ENCODE measurements at regions of chr10 and their contacts with region 1.

Region 1: GRCh38 chr10:12656518-12657142 is 307.3 kb downstream of the CAMK1D start:
- DNase-seq: no peak
- ATAC-seq: peak; percentile 70
- H3K4me3 Mint-ChIP-seq: no peak overlapping the region
- H3K27ac Mint-ChIP-seq: no peak overlapping the region
- H3K4me1 Mint-ChIP-seq: peaks cover 13% of the 10 kb centered on the region
- H3K27me3 Mint-ChIP-seq: no peaks in the 10 kb centered on the region

Region 2: GRCh38 chr10:12214763-12215218 is 441.8 kb before region 1 on chr10:
- CTCF ChIA-PET with region 1: interaction called, 37 read pairs
- POLR2A ChIA-PET with region 1: no interaction called
- DNase-seq: peak; percentile 65
- ATAC-seq: peak; percentile 42
- H3K4me3 Mint-ChIP-seq: peak overlapping the region; percentile 34
- H3K27ac Mint-ChIP-seq: peak overlapping the region; percentile 85
- H3K4me1 Mint-ChIP-seq: peaks cover 14% of the 10 kb centered on the region
- H3K27me3 Mint-ChIP-seq: no peaks in the 10 kb centered on the region

Region 3: DNA sequence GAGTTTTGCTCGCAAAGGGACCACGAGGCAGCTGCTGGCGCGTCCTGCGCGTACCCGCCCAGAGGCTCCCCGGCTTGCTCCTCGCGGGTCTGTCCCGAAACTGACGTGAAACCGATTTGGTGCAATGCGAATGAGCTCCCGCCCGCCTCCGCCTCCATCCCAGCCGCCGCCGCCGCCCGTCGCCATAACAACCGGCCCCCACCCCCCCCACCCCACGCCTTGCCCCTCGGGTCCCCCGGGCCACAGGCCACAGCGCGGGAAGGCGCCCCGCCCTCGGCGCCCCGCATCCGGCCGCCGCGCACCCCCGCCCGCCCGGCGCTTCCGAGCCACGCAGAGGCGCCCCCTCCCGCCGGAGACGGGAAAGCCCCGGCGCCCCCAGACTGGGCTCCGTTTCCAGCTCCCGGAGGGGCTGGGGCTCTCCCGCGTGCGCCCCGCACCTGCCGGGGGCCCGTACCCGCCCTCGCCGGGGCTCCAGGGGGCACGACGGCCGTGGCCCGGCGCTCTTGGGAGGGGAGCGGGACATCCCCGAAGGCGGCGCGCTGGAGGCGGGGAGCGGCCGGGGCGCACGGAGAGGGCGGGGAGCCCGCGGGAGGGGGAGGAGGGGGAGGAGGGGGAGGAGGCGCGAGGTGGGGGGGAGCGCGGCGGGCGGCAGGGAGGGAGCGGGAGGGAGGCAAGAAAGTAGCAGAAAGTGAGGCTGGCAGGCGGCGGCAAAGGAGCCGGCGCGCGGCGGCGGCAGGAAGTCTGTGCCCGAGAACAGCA is 307.6 kb before region 1 on chr10 and contains the start of gene CAMK1D:
- CTCF ChIA-PET with region 1: interaction called, 11 read pairs
- POLR2A ChIA-PET with region 1: no interaction called
- DNase-seq: peak; percentile 93
- ATAC-seq: peak; percentile 76
- H3K4me3 Mint-ChIP-seq: peak within 1 kb of the TSS; percentile 89
- H3K27ac Mint-ChIP-seq: peak within 1 kb of the TSS; percentile 90
- H3K4me1 Mint-ChIP-seq: peaks cover 37% of the 10 kb centered on the region
- H3K27me3 Mint-ChIP-seq: peaks cover 41% of the 10 kb centered on the region
- total RNA-seq, gene CAMK1D: 3.4 to 4.2 TPM

Region 4: GRCh38 chr10:12375076-12375504 is 281.5 kb before region 1 on chr10:
- CTCF ChIA-PET with region 1: no interaction called
- POLR2A ChIA-PET with region 1: no interaction called
- DNase-seq: no peak
- ATAC-seq: no peak
- H3K4me3 Mint-ChIP-seq: no peak overlapping the region
- H3K27ac Mint-ChIP-seq: no peak overlapping the region
- H3K4me1 Mint-ChIP-seq: no peaks in the 10 kb centered on the region
- H3K27me3 Mint-ChIP-seq: no peaks in the 10 kb centered on the region

Region 5: GRCh38 chr10:12418000-12418399 is 238.6 kb before region 1 on chr10:
- CTCF ChIA-PET with region 1: no interaction called
- POLR2A ChIA-PET with region 1: no interaction called
- DNase-seq: no peak
- ATAC-seq: no peak
- H3K4me3 Mint-ChIP-seq: no peak overlapping the region
- H3K27ac Mint-ChIP-seq: no peak overlapping the region
- H3K4me1 Mint-ChIP-seq: peaks cover 20% of the 10 kb centered on the region
- H3K27me3 Mint-ChIP-seq: no peaks in the 10 kb centered on the region

Region 6: DNA sequence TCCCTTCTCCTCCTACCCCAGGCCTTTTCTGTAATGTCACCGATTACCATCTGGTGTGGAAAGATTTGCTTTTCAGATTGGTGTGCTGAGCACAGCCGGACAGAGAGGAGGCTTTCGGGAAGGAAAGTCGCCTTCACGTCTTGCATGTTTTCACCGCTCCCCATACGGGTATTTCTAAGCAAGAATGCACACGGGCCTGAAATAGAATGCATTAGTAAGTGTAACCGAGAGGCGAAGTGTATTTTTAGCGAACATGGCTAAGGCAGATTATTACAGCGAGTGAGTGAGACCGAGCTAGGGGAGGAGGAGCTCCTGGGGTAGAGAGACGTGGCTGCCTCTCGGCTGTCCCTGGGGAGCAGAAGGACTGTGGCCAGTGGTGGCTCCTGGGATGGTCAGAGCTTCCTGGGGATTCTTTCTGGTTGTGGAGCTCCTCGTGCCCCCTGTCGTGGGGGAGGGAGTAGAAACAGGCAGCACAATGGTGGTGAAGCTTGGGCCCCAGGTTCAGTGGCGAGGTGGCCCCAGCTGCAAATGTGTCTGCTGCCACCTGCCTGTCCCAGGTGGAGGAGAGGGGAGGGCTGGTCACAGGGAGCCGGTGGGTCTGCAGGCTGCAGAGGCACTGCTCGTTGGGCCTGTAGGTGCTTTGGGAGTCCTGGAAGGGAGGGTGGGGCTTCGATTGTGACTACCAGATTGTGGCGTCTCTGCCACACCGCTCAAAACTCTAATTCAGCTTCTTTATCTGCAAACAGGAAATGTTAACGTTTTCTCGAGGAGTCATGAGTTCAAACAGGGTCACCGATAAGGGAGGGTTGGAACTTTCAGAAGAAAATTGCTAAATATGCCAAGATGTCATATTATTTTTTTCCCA is 171.5 kb before region 1 on chr10:
- CTCF ChIA-PET with region 1: interaction called, 11 read pairs
- POLR2A ChIA-PET with region 1: no interaction called
- DNase-seq: peak; percentile 38
- ATAC-seq: peak; percentile 64
- H3K4me3 Mint-ChIP-seq: no peak overlapping the region
- H3K27ac Mint-ChIP-seq: peak overlapping the region; percentile 50
- H3K4me1 Mint-ChIP-seq: peaks cover 10% of the 10 kb centered on the region
- H3K27me3 Mint-ChIP-seq: no peaks in the 10 kb centered on the region

Region 7: DNA sequence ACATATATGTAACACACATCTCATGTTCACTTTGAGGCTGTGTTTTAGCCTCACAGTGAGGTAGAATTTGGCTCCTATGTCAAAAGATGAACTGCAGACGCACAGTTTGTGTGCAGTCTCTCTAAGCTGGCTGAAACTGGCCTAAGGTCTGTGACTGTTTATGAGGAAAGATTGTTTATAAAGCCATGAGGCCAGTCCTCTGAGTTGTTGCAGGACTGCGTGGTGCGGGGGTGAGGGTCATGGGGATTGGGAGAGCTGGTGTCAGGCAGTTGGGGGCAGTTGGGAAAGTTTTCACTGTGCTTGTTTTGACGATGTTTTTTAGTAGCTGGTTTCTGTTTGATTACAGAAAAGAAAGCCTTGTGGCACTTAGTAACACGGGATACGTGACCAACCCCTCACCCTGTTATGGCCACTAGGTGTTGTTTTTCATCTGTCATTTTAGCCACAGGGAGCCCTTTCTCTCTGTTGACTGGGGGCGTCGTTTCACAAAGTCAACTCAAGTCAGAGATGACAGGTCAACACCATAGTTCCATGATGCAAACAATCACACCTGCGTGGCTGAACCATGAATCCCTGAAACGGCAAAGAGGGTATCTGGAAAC is 34.0 kb after region 1 on chr10:
- CTCF ChIA-PET with region 1: no interaction called
- POLR2A ChIA-PET with region 1: no interaction called
- DNase-seq: no peak
- ATAC-seq: no peak
- H3K4me3 Mint-ChIP-seq: no peak overlapping the region
- H3K27ac Mint-ChIP-seq: no peak overlapping the region
- H3K4me1 Mint-ChIP-seq: no peaks in the 10 kb centered on the region
- H3K27me3 Mint-ChIP-seq: no peaks in the 10 kb centered on the region

Region 8: GRCh38 chr10:12710594-12711349 is 54.1 kb after region 1 on chr10:
- CTCF ChIA-PET with region 1: interaction called, 30 read pairs
- POLR2A ChIA-PET with region 1: no interaction called
- DNase-seq: peak; percentile 83
- ATAC-seq: peak; percentile 90
- H3K4me3 Mint-ChIP-seq: no peak overlapping the region
- H3K27ac Mint-ChIP-seq: peak overlapping the region; percentile 51
- H3K4me1 Mint-ChIP-seq: peaks cover 32% of the 10 kb centered on the region
- H3K27me3 Mint-ChIP-seq: no peaks in the 10 kb centered on the region